ENCODE measurements at regions of chr4 and their contacts with region 1.

Region 1: GRCh38 chr4:3871181-3871871 is 105.1 kb downstream of the ADRA2C start:
- DNase-seq: peak in 1 of 5 donors; percentile 38
- H3K4me3 ChIP-seq: no peak overlapping the region
- H3K27ac ChIP-seq: no peak overlapping the region
- H3K4me1 ChIP-seq: no peaks in the 10 kb centered on the region
- H3K27me3 ChIP-seq: no peaks in the 10 kb centered on the region
- CTCF ChIP-seq: no peak
- EP300 ChIP-seq: no peak
- POLR2A ChIP-seq: no peak

Region 2: DNA sequence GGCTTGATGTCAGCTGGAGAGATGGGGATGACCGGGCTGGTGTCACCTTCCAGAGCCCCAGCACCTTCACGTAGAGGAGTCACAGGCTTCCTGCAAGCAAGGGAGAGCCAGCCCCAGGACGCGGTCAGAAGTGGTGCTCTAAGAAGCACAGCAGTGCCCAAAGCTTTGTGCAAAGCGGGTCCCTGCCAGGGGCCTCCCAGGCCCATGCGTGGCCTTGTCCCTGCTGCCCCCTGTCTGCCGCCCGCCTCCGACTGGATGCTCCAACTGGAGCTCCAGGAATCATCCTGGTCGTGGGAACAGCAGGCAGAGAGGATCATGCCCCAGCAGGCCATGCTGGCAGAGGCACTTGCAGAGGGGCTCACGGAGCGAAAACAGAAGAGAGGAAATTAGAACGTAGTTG is 299.0 kb before region 1 on chr4:
- intact Hi-C with region 1: loop called in 1 of 4 experiments (anchors 5 kb)
- DNase-seq: no peak
- H3K4me3 ChIP-seq: no peak overlapping the region
- H3K27ac ChIP-seq: no peak overlapping the region
- H3K4me1 ChIP-seq: no peaks in the 10 kb centered on the region
- H3K27me3 ChIP-seq: no peaks in the 10 kb centered on the region
- CTCF ChIP-seq: no peak
- EP300 ChIP-seq: no peak
- POLR2A ChIP-seq: no peak

Region 3: DNA sequence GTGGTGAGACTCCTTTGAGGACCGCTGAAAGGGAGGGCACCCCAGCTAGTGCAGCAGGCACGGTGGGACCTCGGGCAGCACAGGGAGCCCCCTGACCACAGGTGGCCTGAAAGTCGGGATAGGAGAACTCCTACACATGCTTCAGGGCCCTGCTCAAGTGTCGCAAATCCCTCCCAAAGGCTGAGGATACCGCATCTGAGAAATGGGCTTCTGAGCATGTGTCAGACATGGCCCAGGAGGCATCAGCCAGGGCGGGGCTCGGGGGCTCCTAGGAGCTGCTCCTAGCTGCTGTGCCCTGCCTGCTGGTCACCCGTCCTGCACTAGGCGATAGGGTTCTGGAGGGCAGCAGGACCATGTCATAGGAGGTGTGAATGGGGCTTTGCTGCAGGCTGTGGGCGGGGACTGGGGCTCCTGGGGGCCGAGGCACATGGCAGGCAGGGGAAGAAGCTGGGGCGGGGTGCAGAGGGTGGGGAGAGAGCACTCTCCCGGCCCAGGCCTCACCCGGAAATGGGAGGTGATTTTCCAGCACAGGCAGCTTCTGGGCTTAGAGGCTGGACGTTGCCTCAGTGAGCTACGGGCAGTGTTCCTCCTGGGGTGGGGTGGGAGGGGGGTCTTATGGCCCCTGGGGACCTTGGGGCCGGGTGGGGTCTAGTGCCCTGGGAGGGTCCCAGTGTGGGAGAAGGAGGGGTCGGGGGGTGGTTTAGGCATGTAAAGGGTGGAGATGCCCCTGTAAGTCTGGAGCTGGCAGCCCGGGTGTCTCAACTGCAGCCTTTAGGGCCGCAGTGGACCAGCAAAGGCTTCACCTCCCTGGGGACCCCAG is 240.6 kb before region 1 on chr4:
- intact Hi-C with region 1: no loop called
- DNase-seq: no peak
- H3K4me3 ChIP-seq: no peak overlapping the region
- H3K27ac ChIP-seq: no peak overlapping the region
- H3K4me1 ChIP-seq: no peaks in the 10 kb centered on the region
- H3K27me3 ChIP-seq: no peaks in the 10 kb centered on the region
- CTCF ChIP-seq: no peak
- EP300 ChIP-seq: no peak
- POLR2A ChIP-seq: no peak

Region 4: GRCh38 chr4:3756342-3757059 is 114.8 kb before region 1 on chr4:
- intact Hi-C with region 1: no loop called
- DNase-seq: no peak
- H3K4me3 ChIP-seq: no peak overlapping the region
- H3K27ac ChIP-seq: no peak overlapping the region
- H3K4me1 ChIP-seq: no peaks in the 10 kb centered on the region
- H3K27me3 ChIP-seq: no peaks in the 10 kb centered on the region
- CTCF ChIP-seq: no peak
- EP300 ChIP-seq: no peak
- POLR2A ChIP-seq: no peak

Region 5: DNA sequence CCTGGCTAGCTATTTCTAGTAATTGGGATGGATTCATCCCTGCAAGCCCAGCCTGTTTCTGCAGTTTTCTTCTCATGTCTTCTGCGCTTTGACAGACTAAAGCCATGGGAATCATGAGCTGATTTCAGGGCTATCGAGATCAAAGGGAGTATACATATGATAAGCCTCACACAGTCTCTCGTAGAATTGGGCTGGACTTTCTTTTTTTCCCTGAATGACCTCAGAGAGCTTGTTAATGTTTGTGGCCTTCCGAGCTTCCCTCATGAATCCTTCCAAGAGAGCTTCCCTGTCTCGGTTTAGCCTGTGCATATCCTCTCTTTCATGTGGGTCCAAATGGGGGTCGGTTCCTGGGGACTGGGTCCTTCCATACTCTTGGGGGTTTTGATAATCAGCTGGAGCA is 25.1 kb after region 1 on chr4:
- intact Hi-C with region 1: no loop called
- DNase-seq: no peak
- H3K4me3 ChIP-seq: no peak overlapping the region
- H3K27ac ChIP-seq: no peak overlapping the region
- H3K4me1 ChIP-seq: no peaks in the 10 kb centered on the region
- H3K27me3 ChIP-seq: no peaks in the 10 kb centered on the region
- CTCF ChIP-seq: no peak
- EP300 ChIP-seq: no peak
- POLR2A ChIP-seq: no peak

Measured in ovary (tissue), 10 donors.